Lower lobe of right lung (tissue), 2 donors: ENCODE measurements at regions of chr2 and their contacts with region 1.

Region 1: GRCh38 chr2:218710687-218711549 is at the start of gene TTLL4:
- DNase-seq: peak; percentile 99
- ATAC-seq: peak; percentile 99 to 100
- H3K4me3 ChIP-seq: peak within 1 kb of the TSS; percentile 96
- H3K27ac ChIP-seq: peak within 1 kb of the TSS; percentile 91
- H3K4me1 ChIP-seq: peaks cover 10% of the 10 kb centered on the region
- H3K27me3 ChIP-seq: no peaks in the 10 kb centered on the region
- CTCF ChIP-seq: peak; percentile 95
- total RNA-seq, gene TTLL4: 30.0 TPM

Region 2: DNA sequence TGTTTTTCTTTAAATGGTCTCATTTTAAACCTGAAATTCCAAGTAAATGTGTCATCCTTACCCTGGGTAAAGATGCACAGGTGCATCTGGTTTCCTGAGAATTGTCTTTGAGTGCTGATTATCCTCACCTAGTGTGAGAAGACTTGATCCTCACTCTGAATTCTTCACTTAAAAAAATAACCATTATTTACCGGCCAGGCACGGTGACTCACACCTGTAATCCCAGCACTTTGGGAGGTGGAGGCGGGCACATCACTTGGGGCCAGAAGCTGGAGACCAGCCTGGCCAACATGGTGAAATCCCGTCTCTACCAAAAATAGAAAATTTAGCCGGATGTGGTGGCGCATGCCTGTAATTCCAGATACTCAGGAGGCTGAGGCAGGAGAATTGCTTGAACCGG is 138.8 kb after region 1 on chr2:
- intact Hi-C with region 1: loop called (anchors 10 kb)
- DNase-seq: no peak
- ATAC-seq: no peak
- H3K4me3 ChIP-seq: no peak overlapping the region
- H3K27ac ChIP-seq: no peak overlapping the region
- H3K4me1 ChIP-seq: no peaks in the 10 kb centered on the region
- H3K27me3 ChIP-seq: peaks cover 52% of the 10 kb centered on the region
- CTCF ChIP-seq: no peak